Endothelial cell of umbilical vein (primary cell): ENCODE measurements at regions of chr1 and their contacts with region 1.

Region 1: DNA sequence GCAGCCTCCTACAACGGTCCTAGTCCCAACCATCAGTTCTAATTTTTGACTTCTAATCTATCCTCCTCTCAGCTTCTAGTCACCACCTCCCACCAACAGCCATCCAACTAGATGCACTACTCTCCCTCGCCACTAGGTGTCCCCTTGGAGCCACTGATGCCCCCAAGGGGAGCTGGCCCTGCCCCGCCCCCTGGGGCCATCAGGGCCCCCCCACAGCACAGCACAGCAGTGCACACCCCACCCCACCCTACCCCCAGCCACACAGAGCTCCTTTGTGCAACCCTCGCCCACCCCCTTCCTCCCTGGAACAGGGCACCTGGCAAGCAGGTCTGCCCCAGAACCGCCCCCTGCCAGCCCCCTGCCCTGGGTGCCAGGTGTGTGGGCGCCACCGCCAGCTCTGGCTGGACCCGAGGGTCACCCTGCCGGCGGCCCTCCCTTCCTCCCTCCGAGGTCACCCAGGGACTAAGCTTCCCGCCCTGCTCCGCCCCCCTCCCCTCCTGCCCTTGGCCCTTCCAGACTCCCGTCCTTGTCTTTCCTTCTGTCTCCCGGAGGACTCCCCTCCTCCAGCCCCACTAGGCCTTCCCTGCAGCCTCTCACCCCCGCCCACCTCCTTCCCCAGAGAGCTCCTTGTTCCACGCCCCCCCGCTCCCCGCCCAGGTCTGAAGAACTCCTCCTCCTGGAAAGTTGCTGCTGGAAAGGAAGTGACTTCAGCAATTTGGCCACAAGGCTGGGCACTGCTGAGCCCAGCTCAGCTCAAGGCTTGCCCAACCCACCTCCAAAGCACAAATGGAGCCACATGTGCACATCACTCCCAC is 47.0 kb downstream of the AHDC1 start:
- DNase-seq: peak; percentile 86
- H3K4me3 ChIP-seq: no peak overlapping the region
- H3K27ac ChIP-seq: no peak overlapping the region
- H3K4me1 ChIP-seq: peaks cover 10% of the 10 kb centered on the region
- H3K27me3 ChIP-seq: no peaks in the 10 kb centered on the region
- CTCF ChIP-seq: peak; percentile 67 to 92
- POLR2A ChIP-seq: no peak

Region 2: GRCh38 chr1:27392096-27392777 is 164.8 kb before region 1 on chr1 and contains the start of gene GPR3:
- CTCF ChIA-PET with region 1: interaction called, 10 read pairs
- POLR2A ChIA-PET with region 1: no interaction called
- dilution Hi-C with region 1: no loop called
- intact Hi-C with region 1: no loop called
- DNase-seq: peak; percentile 93
- H3K4me3 ChIP-seq: peak within 1 kb of the TSS; percentile 46 to 80 (median 70)
- H3K27ac ChIP-seq: peak within 1 kb of the TSS; percentile 73
- H3K4me1 ChIP-seq: peaks cover 21% of the 10 kb centered on the region
- H3K27me3 ChIP-seq: no peaks in the 10 kb centered on the region
- CTCF ChIP-seq: peak; percentile 66 to 72
- POLR2A ChIP-seq: no peak
- total RNA-seq, gene GPR3: 1.8 and 2.4 TPM in 2 replicates

Region 3: DNA sequence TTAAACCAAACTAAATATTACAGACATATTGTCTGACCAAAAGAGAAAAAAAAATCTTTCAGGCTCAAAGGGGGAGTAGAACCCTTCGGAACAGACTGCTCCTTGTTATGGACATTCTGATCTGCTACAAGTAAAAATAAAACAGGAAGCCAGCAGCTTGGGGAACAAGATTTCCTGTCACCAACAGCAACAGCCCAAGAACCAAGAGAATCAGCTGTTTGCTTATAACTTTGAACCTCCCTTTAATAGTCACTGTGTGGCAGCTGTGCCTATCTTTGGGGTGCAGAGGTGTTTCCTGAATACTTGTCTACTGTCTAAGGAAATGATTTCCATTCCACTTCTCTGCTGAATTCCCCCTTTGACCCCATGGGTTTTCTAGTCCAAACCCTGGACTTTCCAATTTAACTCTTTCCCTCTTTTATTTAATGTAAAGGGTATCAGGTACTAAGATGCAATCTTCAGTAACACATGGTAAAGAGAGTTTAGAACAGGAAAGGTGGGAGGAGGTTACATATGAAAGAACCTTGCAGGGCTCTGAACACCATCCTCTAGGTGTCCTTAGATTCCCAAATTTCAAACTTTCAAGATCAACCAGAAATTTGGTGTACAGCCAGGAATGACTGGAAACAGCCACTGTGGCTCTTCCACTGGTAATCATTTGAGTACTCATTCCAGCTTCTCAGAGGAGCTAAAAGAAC is 125.9 kb before region 1 on chr1:
- CTCF ChIA-PET with region 1: interaction called, 20 read pairs
- POLR2A ChIA-PET with region 1: no interaction called
- dilution Hi-C with region 1: no loop called
- intact Hi-C with region 1: no loop called
- DNase-seq: peak; percentile 77
- H3K4me3 ChIP-seq: no peak overlapping the region
- H3K27ac ChIP-seq: peak overlapping the region; percentile 92
- H3K4me1 ChIP-seq: peaks cover 55% of the 10 kb centered on the region
- H3K27me3 ChIP-seq: no peaks in the 10 kb centered on the region
- CTCF ChIP-seq: no peak
- POLR2A ChIP-seq: no peak

Region 4: GRCh38 chr1:27536767-27537166 is 20.2 kb before region 1 on chr1:
- CTCF ChIA-PET with region 1: interaction called, 19 read pairs
- POLR2A ChIA-PET with region 1: no interaction called
- dilution Hi-C with region 1: no loop called
- intact Hi-C with region 1: no loop called
- DNase-seq: no peak
- H3K4me3 ChIP-seq: no peak overlapping the region
- H3K27ac ChIP-seq: no peak overlapping the region
- H3K4me1 ChIP-seq: peaks cover 7% of the 10 kb centered on the region
- H3K27me3 ChIP-seq: no peaks in the 10 kb centered on the region
- CTCF ChIP-seq: no peak
- POLR2A ChIP-seq: no peak

Region 5: GRCh38 chr1:27574871-27575831 is 18.2 kb after region 1 on chr1:
- CTCF ChIA-PET with region 1: interaction called, 112 read pairs
- POLR2A ChIA-PET with region 1: interaction called, 4 read pairs
- dilution Hi-C with region 1: no loop called
- intact Hi-C with region 1: loop called (anchors 1 kb)
- DNase-seq: peak; percentile 74
- H3K4me3 ChIP-seq: peak overlapping the region in 1 of 3 experiments; percentile 7
- H3K27ac ChIP-seq: peak overlapping the region; percentile 66
- H3K4me1 ChIP-seq: peaks cover 27% of the 10 kb centered on the region
- H3K27me3 ChIP-seq: no peaks in the 10 kb centered on the region
- CTCF ChIP-seq: peak; percentile 54 to 62
- POLR2A ChIP-seq: no peak

Region 6: DNA sequence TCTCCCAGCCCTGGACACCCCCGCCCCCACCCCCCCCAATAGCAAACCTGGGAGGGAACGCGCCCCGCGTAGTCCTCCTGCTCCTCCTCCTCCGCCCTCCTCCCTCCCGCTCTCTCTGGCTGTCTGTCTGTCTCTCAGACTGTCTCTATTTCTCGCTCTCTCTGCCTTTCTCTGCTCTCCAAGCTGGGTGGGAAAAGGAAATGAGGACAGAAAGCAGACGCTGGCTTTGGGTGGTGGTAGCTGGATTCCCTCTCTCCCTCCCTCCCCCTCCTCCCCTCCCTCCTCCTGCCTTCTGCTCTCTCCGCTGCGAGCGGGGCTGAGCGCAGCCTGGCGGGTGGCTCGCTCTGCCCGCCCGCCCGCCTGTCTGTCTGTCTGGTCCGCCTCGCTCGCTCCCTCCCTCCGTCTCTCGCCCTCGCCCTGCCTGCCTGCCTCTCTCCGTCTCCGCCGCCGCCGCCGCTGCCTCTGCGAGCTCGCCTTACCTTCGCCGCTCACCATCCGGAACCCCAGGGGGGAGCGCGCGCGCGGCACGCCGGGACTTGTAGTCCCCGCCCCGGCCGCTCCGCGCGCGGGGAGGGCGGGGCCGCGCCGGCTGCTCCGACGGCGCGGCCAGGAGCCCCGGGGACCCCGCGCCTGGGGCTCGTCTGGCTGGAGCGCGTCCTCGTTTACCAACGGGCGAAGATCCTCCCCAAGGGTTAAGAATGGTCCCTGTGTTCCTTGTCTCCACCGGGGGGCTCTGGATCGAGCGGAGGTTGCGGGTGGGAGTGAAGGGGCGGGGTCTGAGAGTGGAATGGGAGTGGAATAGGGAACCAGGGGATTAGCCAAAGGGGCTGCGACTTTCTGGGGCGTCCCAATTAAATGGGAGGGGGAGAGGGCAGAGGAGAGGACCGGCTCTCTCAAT is 46.9 kb after region 1 on chr1 and contains the start of gene AHDC1:
- CTCF ChIA-PET with region 1: interaction called, 455 read pairs
- POLR2A ChIA-PET with region 1: interaction called, 15 read pairs
- dilution Hi-C with region 1: no loop called
- intact Hi-C with region 1: loop called (anchors 1 kb)
- DNase-seq: peak; percentile 88
- H3K4me3 ChIP-seq: peak within 1 kb of the TSS; percentile 60 to 97 (median 71)
- H3K27ac ChIP-seq: no peak within 1 kb of the TSS
- H3K4me1 ChIP-seq: peaks cover 15% of the 10 kb centered on the region
- H3K27me3 ChIP-seq: no peaks in the 10 kb centered on the region
- CTCF ChIP-seq: no peak
- POLR2A ChIP-seq: peak; percentile 48
- total RNA-seq, gene AHDC1: 32.1 and 33.0 TPM in 2 replicates

Region 7: GRCh38 chr1:27816921-27817630 is 260.1 kb after region 1 on chr1:
- CTCF ChIA-PET with region 1: no interaction called
- POLR2A ChIA-PET with region 1: no interaction called
- dilution Hi-C with region 1: no loop called
- intact Hi-C with region 1: no loop called
- DNase-seq: no peak
- H3K4me3 ChIP-seq: no peak overlapping the region
- H3K27ac ChIP-seq: no peak overlapping the region
- H3K4me1 ChIP-seq: no peaks in the 10 kb centered on the region
- H3K27me3 ChIP-seq: no peaks in the 10 kb centered on the region
- CTCF ChIP-seq: no peak
- POLR2A ChIP-seq: no peak